ENCODE measurements at regions of chr7 and their contacts with region 1.

Region 1: GRCh38 chr7:102236592-102237287 is 49.9 kb upstream of the SH2B2 start:
- DNase-seq: peak; percentile 81 to 88 (median 86)
- ATAC-seq: peak; percentile 98
- H3K4me3 ChIP-seq: no peak overlapping the region
- H3K27ac ChIP-seq: no peak overlapping the region
- H3K4me1 ChIP-seq: peaks cover 0 to 6% of the 10 kb centered on the region in 2 experiments; a peak in 1 of 5 replicates
- H3K27me3 ChIP-seq: no peaks in the 10 kb centered on the region
- CTCF ChIP-seq: peak; percentile 85 to 94 (median 90)
- EP300 ChIP-seq: no peak
- POLR2A ChIP-seq: no peak
- RAD21 ChIP-seq: peak; percentile 93

Region 2: GRCh38 chr7:101542527-101543241 is 694.1 kb before region 1 on chr7:
- CTCF ChIA-PET with region 1: interaction called, 11 read pairs
- POLR2A ChIA-PET with region 1: no interaction called
- in situ Hi-C with region 1: no loop called
- intact Hi-C with region 1: no loop called
- DNase-seq: peak; percentile 68 to 81 (median 76)
- ATAC-seq: peak; percentile 76
- H3K4me3 ChIP-seq: no peak overlapping the region
- H3K27ac ChIP-seq: no peak overlapping the region
- H3K4me1 ChIP-seq: peaks cover 0 to 26% of the 10 kb centered on the region in 2 experiments; a peak in 1 of 5 replicates
- H3K27me3 ChIP-seq: peaks cover 0 to 5% of the 10 kb centered on the region in 2 experiments; a peak in 2 of 5 replicates
- CTCF ChIP-seq: peak; percentile 88 to 93 (median 91)
- EP300 ChIP-seq: no peak
- POLR2A ChIP-seq: no peak
- RAD21 ChIP-seq: peak; percentile 89 to 93

Region 3: DNA sequence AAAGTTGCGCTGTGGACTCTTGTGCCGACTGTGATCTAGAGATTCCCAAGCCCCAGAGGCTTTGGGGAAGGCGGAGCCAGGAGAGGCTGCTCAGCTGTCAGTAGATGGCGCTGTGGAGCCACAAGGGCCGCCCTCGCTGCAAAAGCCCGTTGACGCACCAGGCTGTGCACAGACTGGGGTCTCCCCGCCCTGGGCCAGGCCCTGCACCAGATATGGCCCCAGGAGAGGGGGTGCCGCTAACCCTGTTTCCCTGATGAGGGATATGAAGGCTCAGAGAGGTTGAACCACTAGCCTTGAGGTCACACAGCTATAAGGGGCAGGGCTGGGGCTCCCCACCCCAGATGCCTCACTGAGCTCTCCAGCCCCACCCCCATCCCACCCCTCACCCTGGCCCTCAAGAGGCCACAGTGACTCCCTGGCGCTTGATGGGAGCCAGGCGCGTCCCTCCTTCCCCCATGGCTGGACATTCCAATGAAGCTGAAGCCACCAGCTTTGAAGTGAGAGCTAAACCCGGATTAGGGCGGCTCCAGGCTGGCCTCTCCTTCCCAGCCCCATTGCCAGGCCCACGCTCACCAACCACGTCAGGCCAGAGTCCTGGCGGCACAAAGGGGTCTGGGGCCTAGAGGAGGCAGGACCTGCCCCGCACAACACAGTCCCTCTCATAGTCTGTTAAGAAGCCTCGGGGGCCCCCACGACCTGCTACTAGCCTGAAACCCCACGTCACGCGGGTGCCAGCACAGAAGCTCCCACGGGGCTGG is 634.1 kb before region 1 on chr7:
- CTCF ChIA-PET with region 1: interaction called, 8 read pairs
- POLR2A ChIA-PET with region 1: no interaction called
- in situ Hi-C with region 1: no loop called
- intact Hi-C with region 1: loop called (anchors 5 kb)
- DNase-seq: peak; percentile 80 to 91 (median 88)
- ATAC-seq: peak; percentile 97
- H3K4me3 ChIP-seq: no peak overlapping the region
- H3K27ac ChIP-seq: no peak overlapping the region
- H3K4me1 ChIP-seq: peaks cover 0 to 21% of the 10 kb centered on the region in 2 experiments; a peak in 2 of 5 replicates
- H3K27me3 ChIP-seq: peaks cover 0 to 60% of the 10 kb centered on the region in 2 experiments; a peak in 4 of 5 replicates
- CTCF ChIP-seq: peak; percentile 93 to 95 (median 94)
- EP300 ChIP-seq: no peak
- POLR2A ChIP-seq: no peak
- RAD21 ChIP-seq: peak; percentile 84 to 92

Region 4: GRCh38 chr7:101688183-101688831 is 548.4 kb before region 1 on chr7:
- CTCF ChIA-PET with region 1: interaction called, 14 read pairs
- POLR2A ChIA-PET with region 1: no interaction called
- in situ Hi-C with region 1: loop called (anchors 10 kb)
- intact Hi-C with region 1: loop called (anchors 2 kb)
- DNase-seq: peak; percentile 87 to 95 (median 92)
- ATAC-seq: peak; percentile 96
- H3K4me3 ChIP-seq: peak overlapping the region; percentile 36
- H3K27ac ChIP-seq: peak overlapping the region; percentile 76; the same call in 2 of the 3 replicates
- H3K4me1 ChIP-seq: peaks cover 5 to 12% of the 10 kb centered on the region in 2 experiments; a peak in 3 of 5 replicates
- H3K27me3 ChIP-seq: peaks cover 0 to 8% of the 10 kb centered on the region in 2 experiments; a peak in 1 of 5 replicates
- CTCF ChIP-seq: peak; percentile 86 to 95 (median 93)
- EP300 ChIP-seq: no peak
- POLR2A ChIP-seq: no peak
- RAD21 ChIP-seq: peak; percentile 95 to 97

Region 5: DNA sequence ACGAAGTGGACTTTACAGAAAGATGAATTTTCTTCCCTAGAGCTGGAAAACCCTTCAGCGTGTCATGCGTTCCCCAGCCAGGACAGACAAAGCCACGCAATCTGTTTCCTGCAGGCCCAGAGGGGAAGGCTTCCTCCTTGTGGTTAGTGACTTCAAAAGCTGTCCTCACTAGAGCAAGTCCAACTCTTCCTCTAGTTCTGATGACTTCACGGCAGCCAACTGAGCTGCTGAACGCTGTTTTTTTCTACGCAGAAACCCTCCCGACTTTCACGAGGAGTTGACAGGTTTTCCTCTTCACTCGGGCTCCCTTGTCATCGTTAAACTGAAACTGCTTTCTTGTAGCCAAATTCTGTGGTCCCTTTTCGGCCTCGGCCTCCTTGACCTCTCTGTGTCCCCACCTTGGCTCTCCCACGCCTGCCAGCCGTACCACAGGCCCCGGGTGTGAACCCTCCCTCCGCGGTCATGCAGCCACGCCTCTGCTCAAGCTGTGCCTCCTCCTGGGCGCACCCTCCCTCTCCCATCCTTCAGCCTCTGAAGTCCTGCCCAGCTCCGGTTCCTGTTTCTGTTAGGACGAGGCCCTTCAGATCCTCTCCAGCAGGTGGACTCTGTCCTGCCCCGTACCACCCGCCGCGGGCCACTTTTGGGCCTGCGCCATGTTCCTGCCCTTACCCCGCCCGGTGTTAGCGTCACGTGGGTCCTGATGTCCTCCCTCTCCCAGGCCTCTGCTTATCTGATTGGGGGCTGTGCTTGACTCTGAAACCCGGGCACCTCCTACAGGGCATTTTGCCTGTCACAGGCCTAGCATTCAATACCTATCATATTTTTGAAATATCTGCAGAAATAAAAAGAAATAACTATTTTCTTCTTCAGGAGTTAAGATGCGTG is 380.0 kb before region 1 on chr7:
- CTCF ChIA-PET with region 1: interaction called, 4 read pairs
- POLR2A ChIA-PET with region 1: no interaction called
- in situ Hi-C with region 1: no loop called
- intact Hi-C with region 1: loop called (anchors 1 kb)
- DNase-seq: peak; percentile 97 to 98 (median 97)
- ATAC-seq: peak; percentile 94
- H3K4me3 ChIP-seq: peak overlapping the region; percentile 34
- H3K27ac ChIP-seq: peak overlapping the region; percentile 98
- H3K4me1 ChIP-seq: peaks cover 47 to 57% of the 10 kb centered on the region in 2 experiments
- H3K27me3 ChIP-seq: no peaks in the 10 kb centered on the region; a peak in 1 of 5 replicates
- CTCF ChIP-seq: peak; percentile 79 to 84 (median 82)
- EP300 ChIP-seq: peak; percentile 68
- POLR2A ChIP-seq: peak; percentile 69
- RAD21 ChIP-seq: peak; percentile 77 to 84

Region 6: GRCh38 chr7:102211590-102212550 is 24.9 kb before region 1 on chr7:
- CTCF ChIA-PET with region 1: no interaction called
- POLR2A ChIA-PET with region 1: no interaction called
- in situ Hi-C with region 1: no loop called
- intact Hi-C with region 1: no loop called
- DNase-seq: no peak
- ATAC-seq: no peak
- H3K4me3 ChIP-seq: no peak overlapping the region
- H3K27ac ChIP-seq: no peak overlapping the region
- H3K4me1 ChIP-seq: no peaks in the 10 kb centered on the region; a peak in 1 of 5 replicates
- H3K27me3 ChIP-seq: no peaks in the 10 kb centered on the region
- CTCF ChIP-seq: no peak
- EP300 ChIP-seq: no peak
- POLR2A ChIP-seq: no peak
- RAD21 ChIP-seq: no peak

Region 7: DNA sequence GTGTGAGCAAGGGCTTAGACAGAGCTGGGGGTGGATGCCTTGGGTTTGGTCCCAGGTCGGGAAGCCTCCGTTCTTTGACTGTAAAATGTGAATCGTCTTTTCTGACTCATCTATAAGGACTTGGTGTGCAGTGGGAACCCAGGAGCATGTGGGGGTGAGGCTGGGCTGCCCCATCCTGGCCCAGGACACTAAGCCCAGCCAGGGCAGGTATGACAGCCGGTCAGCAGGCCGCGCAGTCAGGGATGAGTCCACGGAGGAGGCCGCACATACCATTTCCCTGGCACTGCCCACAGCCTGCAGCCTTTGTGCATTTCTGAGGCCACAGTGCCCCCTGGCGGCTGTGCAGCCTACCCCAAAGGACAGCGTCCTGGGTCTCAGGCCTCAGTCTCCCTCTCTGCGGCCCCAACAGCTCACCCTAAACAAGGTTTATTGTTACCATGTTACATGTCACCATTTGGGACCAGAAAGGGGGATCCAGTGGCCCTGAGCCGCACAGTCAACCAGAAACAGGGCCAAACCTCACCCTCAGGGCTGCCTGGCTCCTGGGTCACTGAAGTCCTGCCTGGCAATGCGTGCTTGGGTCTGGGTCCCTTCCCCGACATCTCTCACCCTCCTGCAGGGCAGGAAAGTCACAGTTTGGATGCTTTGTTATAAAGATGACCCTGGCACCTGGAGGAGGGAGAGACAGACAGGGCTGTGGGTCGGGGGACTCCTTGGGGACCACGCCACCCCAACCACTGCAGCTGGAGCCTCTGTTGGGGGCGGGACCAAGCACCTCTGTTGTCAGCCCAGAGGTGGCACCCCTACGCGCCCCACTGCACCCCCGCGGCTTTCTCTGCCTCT is 35.6 kb after region 1 on chr7:
- CTCF ChIA-PET with region 1: no interaction called
- POLR2A ChIA-PET with region 1: no interaction called
- in situ Hi-C with region 1: no loop called
- intact Hi-C with region 1: loop called (anchors 1 kb)
- DNase-seq: peak; percentile 80 to 87 (median 84)
- ATAC-seq: peak; percentile 85
- H3K4me3 ChIP-seq: no peak overlapping the region
- H3K27ac ChIP-seq: no peak overlapping the region
- H3K4me1 ChIP-seq: peaks cover 15 to 54% of the 10 kb centered on the region in 2 experiments; a peak in 4 of 5 replicates
- H3K27me3 ChIP-seq: peaks cover 0 to 10% of the 10 kb centered on the region in 2 experiments; a peak in 2 of 5 replicates
- CTCF ChIP-seq: peak; percentile 91 to 98 (median 92)
- EP300 ChIP-seq: peak; percentile 25; the same call in 1 of the 2 replicates
- POLR2A ChIP-seq: no peak
- RAD21 ChIP-seq: peak; percentile 96 to 98